ENCODE measurements at regions of chr15 and their contacts with region 1.

Region 1: GRCh38 chr15:62248277-62248984 is 83.3 kb upstream of the C2CD4B start:
- DNase-seq: no peak
- ATAC-seq: no peak
- H3K4me3 ChIP-seq: no peak overlapping the region
- H3K27ac ChIP-seq: no peak overlapping the region
- H3K4me1 ChIP-seq: no peaks in the 10 kb centered on the region
- H3K27me3 ChIP-seq: no peaks in the 10 kb centered on the region
- CTCF ChIP-seq: no peak
- POLR2A ChIP-seq: no peak

Region 2: DNA sequence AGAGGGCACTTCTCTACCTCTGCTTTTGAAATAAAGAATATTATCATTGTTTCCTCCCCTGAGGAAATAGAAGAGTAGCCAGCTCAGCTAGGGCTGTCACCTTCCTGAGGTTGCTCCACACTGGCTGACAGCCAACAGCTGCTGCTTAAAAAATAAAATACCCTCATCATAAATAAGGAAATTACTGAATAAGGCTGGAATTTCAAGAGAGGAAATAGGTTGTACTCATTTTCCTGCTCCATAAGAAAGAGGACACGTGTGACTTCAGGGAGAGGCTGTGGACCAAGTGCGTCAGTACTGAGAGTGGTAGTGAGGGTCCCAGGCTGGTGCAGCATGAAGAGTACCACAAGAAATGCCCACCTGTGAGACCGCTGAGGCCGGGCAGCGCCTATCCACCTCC is 75.2 kb before region 1 on chr15:
- intact Hi-C with region 1: loop called in 2 of 10 experiments (anchors 5 to 10 kb)
- DNase-seq: peak; percentile 63 to 79 (median 70)
- ATAC-seq: peak; percentile 51 to 94 (median 81)
- H3K4me3 ChIP-seq: peak overlapping the region in 11 of 12 donors; percentile 5 to 50 (median 34)
- H3K27ac ChIP-seq: peak overlapping the region; percentile 46 to 85 (median 78)
- H3K4me1 ChIP-seq: peaks cover 0 to 27% (median 11%) of the 10 kb centered on the region in 12 donors
- H3K27me3 ChIP-seq: peaks cover 0 to 3% (median 0%) of the 10 kb centered on the region in 9 donors
- CTCF ChIP-seq: no peak
- POLR2A ChIP-seq: peak in 1 of 2 donors; percentile 27

Region 3: GRCh38 chr15:64045774-64046346 is 1797.4 kb after region 1 on chr15:
- intact Hi-C with region 1: no loop called
- DNase-seq: peak; percentile 21 to 75 (median 54)
- ATAC-seq: peak; percentile 29 to 45 (median 30)
- H3K4me3 ChIP-seq: peak overlapping the region; percentile 56 to 85 (median 72)
- H3K27ac ChIP-seq: peak overlapping the region in 11 of 12 donors; percentile 60 to 88 (median 80)
- H3K4me1 ChIP-seq: peaks cover 0 to 63% (median 31%) of the 10 kb centered on the region in 12 donors
- H3K27me3 ChIP-seq: no peaks in the 10 kb centered on the region
- CTCF ChIP-seq: no peak
- POLR2A ChIP-seq: no peak

Measured in heart left ventricle (tissue), 16 donors.